Natural killer cell (primary cell): ENCODE measurements at regions of chr9 and their contacts with region 1.

Region 1: GRCh38 chr9:15416880-15417279 is 5.8 kb upstream of the SNAPC3 start:
- DNase-seq: peak in 1 of 2 donors; percentile 69
- ATAC-seq: peak in 2 of 3 donors; percentile 64 to 65
- H3K4me3 ChIP-seq: no peak overlapping the region
- H3K4me3 Mint-ChIP-seq: no peak overlapping the region
- H3K27ac ChIP-seq: no peak overlapping the region
- H3K27ac Mint-ChIP-seq: no peak overlapping the region
- H3K4me1 ChIP-seq: peaks cover under 1% of the 10 kb centered on the region
- H3K4me1 Mint-ChIP-seq: peaks cover 13% of the 10 kb centered on the region in 2 donors
- H3K27me3 ChIP-seq: no peaks in the 10 kb centered on the region
- H3K27me3 Mint-ChIP-seq: no peaks in the 10 kb centered on the region
- CTCF ChIP-seq: peak; percentile 50

Region 2: DNA sequence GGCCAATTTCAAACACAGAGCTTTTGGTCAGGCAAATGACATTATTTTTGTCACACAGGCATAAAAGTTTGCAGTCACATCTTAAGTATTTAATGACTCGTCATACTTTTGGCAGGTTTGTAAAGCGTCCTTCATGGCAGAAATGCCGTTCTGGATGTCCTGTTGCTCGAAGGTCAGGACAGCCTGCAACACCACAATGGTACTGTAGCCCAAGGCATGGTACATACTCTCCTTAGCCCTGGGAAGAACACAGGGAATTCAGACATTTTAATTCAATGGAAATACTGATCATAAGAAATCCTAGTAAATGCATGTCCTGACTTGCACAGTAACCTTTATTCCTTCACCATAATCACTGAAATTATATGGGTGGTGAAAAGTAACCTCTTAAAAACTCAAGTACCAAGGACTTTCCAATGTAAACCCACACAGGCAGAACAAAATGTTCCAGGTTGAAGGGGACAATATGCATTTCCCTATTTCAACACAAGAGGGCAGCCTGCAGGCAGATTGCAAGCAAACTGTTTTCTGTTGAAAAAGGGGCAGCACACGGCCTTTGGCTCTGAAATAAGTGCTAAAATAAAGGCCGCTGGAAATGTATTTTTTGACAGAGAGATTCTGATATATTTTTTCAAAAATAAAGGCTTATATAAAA is 205.6 kb before region 1 on chr9:
- intact Hi-C with region 1: loop called (anchors 1 kb)
- DNase-seq: peak; percentile 23 to 80
- ATAC-seq: peak in 2 of 3 donors; percentile 64 to 68
- H3K4me3 ChIP-seq: no peak overlapping the region
- H3K4me3 Mint-ChIP-seq: no peak overlapping the region
- H3K27ac ChIP-seq: no peak overlapping the region
- H3K27ac Mint-ChIP-seq: no peak overlapping the region
- H3K4me1 ChIP-seq: no peaks in the 10 kb centered on the region
- H3K4me1 Mint-ChIP-seq: peaks cover 9 to 22% of the 10 kb centered on the region in 2 donors
- H3K27me3 ChIP-seq: no peaks in the 10 kb centered on the region
- H3K27me3 Mint-ChIP-seq: no peaks in the 10 kb centered on the region
- CTCF ChIP-seq: peak; percentile 91

Region 3: GRCh38 chr9:15271403-15271802 is 145.5 kb before region 1 on chr9:
- intact Hi-C with region 1: loop called (anchors 1 kb)
- DNase-seq: peak; percentile 35 to 51
- ATAC-seq: peak; percentile 85 to 100 (median 97)
- H3K4me3 ChIP-seq: no peak overlapping the region
- H3K4me3 Mint-ChIP-seq: no peak overlapping the region
- H3K27ac ChIP-seq: no peak overlapping the region
- H3K27ac Mint-ChIP-seq: peak overlapping the region in 1 of 2 donors; percentile 27
- H3K4me1 ChIP-seq: peaks cover 11% of the 10 kb centered on the region
- H3K4me1 Mint-ChIP-seq: peaks cover 49 to 60% of the 10 kb centered on the region in 2 donors
- H3K27me3 ChIP-seq: no peaks in the 10 kb centered on the region
- H3K27me3 Mint-ChIP-seq: no peaks in the 10 kb centered on the region
- CTCF ChIP-seq: peak; percentile 18

Region 4: DNA sequence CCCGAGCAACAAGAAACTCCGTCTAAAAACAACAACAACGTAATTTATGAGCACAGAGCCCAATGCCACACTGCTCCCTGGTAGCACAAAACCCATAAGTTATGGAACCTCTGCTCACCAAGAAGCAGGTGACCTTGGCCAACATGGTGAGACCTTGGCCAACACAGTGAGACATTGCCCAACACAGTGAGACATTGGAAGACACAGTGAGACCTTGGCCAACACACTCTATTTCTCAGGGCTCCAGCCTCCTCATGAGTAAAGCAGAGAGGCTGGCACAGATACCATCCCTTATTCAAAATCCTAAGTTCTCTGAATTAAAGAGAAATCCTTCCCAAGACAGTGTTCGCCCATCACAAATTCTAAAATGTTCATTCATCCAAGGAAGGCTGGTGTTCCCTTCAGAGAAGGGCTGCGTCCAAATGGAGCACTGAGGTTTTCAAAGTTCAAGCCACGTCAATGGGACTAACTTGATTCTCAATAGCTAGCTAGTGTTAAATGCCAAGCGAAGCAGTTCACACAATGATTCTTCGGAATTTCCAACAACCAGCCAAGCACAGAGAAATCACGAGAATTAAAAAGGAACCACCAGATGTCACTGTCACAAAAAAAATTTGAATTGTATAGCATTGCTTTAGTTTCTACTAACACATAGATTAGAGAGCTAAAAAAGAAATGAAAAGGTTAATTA is 139.3 kb before region 1 on chr9:
- intact Hi-C with region 1: loop called (anchors 2 kb)
- DNase-seq: peak in 1 of 2 donors; percentile 63
- ATAC-seq: peak in 2 of 3 donors; percentile 52 to 65
- H3K4me3 ChIP-seq: no peak overlapping the region
- H3K4me3 Mint-ChIP-seq: no peak overlapping the region
- H3K27ac ChIP-seq: no peak overlapping the region
- H3K27ac Mint-ChIP-seq: peak overlapping the region; percentile 42 to 58
- H3K4me1 ChIP-seq: peaks cover 6% of the 10 kb centered on the region
- H3K4me1 Mint-ChIP-seq: peaks cover 37 to 62% of the 10 kb centered on the region in 2 donors
- H3K27me3 ChIP-seq: no peaks in the 10 kb centered on the region
- H3K27me3 Mint-ChIP-seq: no peaks in the 10 kb centered on the region
- CTCF ChIP-seq: peak; percentile 46